OCI-LY7 (cell line): ENCODE measurements at regions of chr2 and their contacts with region 1.

Region 1: GRCh38 chr2:164910101-164910899 is 45.0 kb downstream of the SLC38A11 start:
- DNase-seq: peak; percentile 41
- H3K4me3 ChIP-seq: no peak overlapping the region
- H3K27ac ChIP-seq: no peak overlapping the region
- H3K4me1 ChIP-seq: peaks cover 4% of the 10 kb centered on the region
- CTCF ChIP-seq: no peak

Region 2: GRCh38 chr2:164841719-164842623 is 68.3 kb before region 1 on chr2 and contains the start of gene COBLL1:
- CTCF ChIA-PET with region 1: no interaction called
- POLR2A ChIA-PET with region 1: interaction called, 3 read pairs
- intact Hi-C with region 1: loop called (anchors 5 kb)
- DNase-seq: peak; percentile 29
- H3K4me3 ChIP-seq: peak within 1 kb of the TSS; percentile 65
- H3K27ac ChIP-seq: no peak within 1 kb of the TSS
- H3K4me1 ChIP-seq: peaks cover 3% of the 10 kb centered on the region
- CTCF ChIP-seq: peak; percentile 72
- total RNA-seq, gene COBLL1: 0.79 and 0.88 TPM in 2 replicates

Region 3: GRCh38 chr2:164967781-164968228 is 57.5 kb after region 1 on chr2:
- CTCF ChIA-PET with region 1: no interaction called
- POLR2A ChIA-PET with region 1: no interaction called
- intact Hi-C with region 1: no loop called
- DNase-seq: no peak
- H3K4me3 ChIP-seq: no peak overlapping the region
- H3K27ac ChIP-seq: no peak overlapping the region
- H3K4me1 ChIP-seq: no peaks in the 10 kb centered on the region
- CTCF ChIP-seq: no peak